Left ventricle myocardium inferior (tissue), 1 donor: ENCODE measurements at regions of chr7 and their contacts with region 1.

Region 1: GRCh38 chr7:42940985-42941847 is 9.0 kb downstream of the MRPL32 start:
- DNase-seq: peak; percentile 74
- H3K4me3 ChIP-seq: no peak overlapping the region
- H3K27ac ChIP-seq: no peak overlapping the region
- H3K4me1 ChIP-seq: no peaks in the 10 kb centered on the region
- H3K27me3 ChIP-seq: no peaks in the 10 kb centered on the region
- CTCF ChIP-seq: peak; percentile 90

Region 2: DNA sequence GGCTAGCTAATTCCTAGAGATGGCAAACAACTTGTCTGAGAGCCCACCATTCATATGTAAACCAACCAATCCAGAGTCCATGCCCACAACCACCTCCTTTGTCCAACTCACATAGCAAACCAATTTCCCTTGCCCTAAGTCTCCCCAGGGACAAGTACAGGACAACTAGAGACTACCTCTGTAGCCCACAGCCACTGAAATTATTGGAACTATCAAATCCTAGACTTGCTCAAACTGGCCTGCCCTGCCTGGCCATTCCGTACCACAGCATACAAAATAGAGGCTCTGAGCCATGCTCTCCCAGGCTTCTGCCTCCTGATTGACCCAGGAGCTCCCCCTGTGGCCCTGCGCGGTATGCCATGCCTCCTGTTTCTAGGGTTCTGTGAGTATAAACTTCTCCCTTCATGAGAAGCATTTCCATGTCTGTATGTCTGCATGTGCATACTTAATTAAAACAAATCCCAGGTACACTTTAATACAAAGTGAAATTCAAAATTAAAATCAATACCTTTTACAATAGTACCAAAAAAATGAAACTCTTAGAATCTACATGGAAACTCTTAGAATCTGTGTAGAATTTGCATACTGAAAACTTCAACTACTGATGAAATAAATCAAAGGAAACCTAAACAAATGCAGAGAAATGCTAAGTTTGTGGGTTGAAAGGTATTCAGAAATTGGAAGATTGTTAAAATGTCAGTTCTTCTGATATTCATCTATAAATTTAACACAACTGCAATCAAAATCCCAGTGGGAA is 167.2 kb after region 1 on chr7:
- intact Hi-C with region 1: loop called (anchors 5 kb)
- DNase-seq: peak; percentile 44
- H3K4me3 ChIP-seq: no peak overlapping the region
- H3K27ac ChIP-seq: no peak overlapping the region
- H3K4me1 ChIP-seq: peaks cover 14% of the 10 kb centered on the region
- H3K27me3 ChIP-seq: peaks cover 71% of the 10 kb centered on the region
- CTCF ChIP-seq: peak; percentile 81

Region 3: DNA sequence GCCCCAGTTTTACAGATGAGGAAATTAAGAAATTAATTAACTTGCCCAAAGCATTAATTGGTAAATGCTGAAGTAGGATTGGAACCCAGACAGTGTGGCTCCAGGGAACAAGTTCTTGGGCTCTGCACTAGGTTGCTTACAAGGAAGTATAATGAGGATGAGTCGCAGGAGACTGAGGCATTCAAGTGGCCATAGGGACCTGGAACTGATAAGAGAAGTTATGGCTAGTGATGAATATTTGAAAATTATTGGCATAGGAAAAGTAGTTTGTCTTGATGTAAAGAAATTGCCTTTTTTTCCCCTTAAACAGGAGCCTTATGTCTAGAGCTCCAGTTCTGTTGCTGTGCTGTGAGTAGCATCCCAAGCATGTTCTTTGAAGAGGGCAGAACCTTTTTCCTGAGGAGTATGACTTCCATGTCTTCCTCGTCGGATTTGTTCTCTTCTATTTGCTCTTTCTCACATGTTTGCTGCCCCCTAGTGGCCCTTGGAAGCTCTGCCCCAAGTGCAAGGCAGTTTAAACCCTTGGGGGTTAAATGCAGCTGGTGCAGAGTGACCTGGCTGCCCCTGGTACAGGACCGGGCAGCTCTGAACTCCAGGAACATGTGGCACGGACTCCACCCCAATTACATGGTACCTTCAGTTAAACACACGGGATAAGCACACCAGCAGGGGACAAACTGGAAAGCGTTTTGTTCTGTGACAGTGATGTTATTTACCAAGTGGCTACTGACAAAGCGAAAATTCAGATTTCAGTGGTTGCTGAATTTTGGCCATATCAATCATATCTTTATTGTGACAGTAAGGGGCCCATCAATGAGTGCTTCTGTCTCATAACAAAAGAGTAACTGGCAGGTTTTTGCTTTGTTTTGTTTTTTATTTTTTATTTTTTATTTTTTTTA is 320.0 kb after region 1 on chr7:
- intact Hi-C with region 1: loop called (anchors 10 kb)
- DNase-seq: peak; percentile 47
- H3K4me3 ChIP-seq: no peak overlapping the region
- H3K27ac ChIP-seq: no peak overlapping the region
- H3K4me1 ChIP-seq: no peaks in the 10 kb centered on the region
- H3K27me3 ChIP-seq: peaks cover 40% of the 10 kb centered on the region
- CTCF ChIP-seq: peak; percentile 88